ENCODE measurements at regions of chr12 and their contacts with region 1.

Region 1: DNA sequence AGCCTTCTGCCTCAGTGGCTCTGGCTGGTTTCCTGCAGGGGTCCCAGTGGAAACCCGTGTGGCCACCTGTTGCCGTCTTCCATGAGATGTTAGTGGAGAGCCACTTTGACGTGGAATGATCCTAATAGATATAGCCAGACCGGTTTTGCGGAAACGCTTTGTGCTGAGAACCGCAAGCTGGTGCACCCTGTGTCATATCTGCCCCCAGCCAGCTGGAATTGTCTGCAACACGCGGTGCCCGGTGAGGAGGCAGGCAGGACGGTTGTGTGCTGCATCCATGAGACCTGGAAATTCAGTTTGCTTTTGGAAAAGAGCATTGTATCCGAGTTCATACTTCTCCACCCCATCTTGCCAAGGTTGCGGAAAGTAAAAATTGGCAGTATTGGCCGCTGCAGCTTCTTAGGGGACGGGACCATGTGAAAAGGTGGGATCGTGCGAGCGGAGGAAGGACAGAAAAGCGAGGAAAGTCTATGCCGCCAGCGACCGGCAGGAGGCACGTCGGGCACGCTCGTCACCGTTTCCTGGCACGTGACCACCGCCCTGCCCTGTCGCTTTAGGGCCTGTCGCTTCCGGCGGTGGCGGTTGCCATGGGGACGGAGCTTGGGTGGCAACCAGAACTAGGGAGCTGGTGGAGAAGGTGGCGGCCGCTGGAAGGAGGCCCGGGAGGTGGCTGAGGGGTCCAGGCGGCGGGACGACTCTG is at the start of gene CFAP251:
- DNase-seq: peak; percentile 100
- H3K4me3 ChIP-seq: peak within 1 kb of the TSS; percentile 22 to 70 (median 46)
- H3K27ac ChIP-seq: peak within 1 kb of the TSS; percentile 32 to 80 (median 74)
- H3K4me1 ChIP-seq: peaks cover 5 to 45% (median 29%) of the 10 kb centered on the region in 6 donors
- H3K27me3 ChIP-seq: no peaks in the 10 kb centered on the region
- CTCF ChIP-seq: peak; percentile 64 to 99 (median 91)
- POLR2A ChIP-seq: no peak
- total RNA-seq, gene CFAP251: 3.0 to 10.5 (median 6.1) TPM

Region 2: DNA sequence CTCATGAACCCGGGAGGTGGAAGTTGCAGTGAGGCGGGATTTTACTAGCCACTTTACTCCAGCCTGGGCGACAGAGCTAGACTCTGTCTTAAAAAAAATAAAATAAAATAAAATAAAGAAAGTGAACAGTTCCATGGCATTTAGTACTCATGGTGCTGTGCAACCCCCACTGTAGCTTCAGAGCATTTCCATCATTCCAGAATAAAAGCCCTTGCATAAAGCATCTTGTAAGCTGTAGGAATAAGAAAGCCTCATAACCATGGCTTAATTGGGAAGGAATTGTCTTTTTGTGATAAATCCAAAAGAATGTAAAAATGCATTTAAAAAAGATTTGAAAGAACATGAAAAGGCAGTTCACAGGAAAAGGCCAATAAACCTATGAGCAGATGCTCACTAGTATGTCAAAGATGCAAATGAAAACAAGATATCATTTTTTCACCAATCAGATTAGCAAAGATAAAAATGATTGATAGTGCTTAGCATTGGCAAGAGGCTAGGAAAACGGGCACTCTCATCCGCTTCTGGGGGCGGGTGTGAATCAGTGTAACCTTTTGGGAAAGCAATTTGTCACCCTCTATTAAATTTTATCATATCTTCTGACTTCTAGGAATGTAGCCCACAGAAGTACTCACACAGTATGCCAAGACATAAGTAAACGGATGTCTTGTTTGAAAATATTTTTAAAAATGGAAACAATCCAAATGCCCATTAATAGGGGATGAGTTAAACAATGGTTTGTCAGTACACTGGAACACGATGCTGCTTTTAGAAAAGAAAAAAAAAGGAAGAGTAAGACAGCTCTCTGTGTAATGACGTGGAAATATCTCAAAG is 46.9 kb after region 1 on chr12:
- intact Hi-C with region 1: no loop called
- DNase-seq: no peak
- H3K4me3 ChIP-seq: no peak overlapping the region
- H3K27ac ChIP-seq: no peak overlapping the region
- H3K4me1 ChIP-seq: peaks cover 0 to 28% (median 9%) of the 10 kb centered on the region in 6 donors
- H3K27me3 ChIP-seq: no peaks in the 10 kb centered on the region
- CTCF ChIP-seq: no peak
- POLR2A ChIP-seq: no peak

Region 3: GRCh38 chr12:122031342-122032216 is 113.5 kb after region 1 on chr12:
- intact Hi-C with region 1: loop called (anchors 5 kb)
- DNase-seq: no peak
- H3K4me3 ChIP-seq: no peak overlapping the region
- H3K27ac ChIP-seq: no peak overlapping the region
- H3K4me1 ChIP-seq: peaks cover 3 to 61% (median 33%) of the 10 kb centered on the region in 6 donors
- H3K27me3 ChIP-seq: no peaks in the 10 kb centered on the region
- CTCF ChIP-seq: peak in 10 of 11 experiments; percentile 37 to 81 (median 70)
- POLR2A ChIP-seq: no peak

Measured in spleen (tissue), 13 donors.